Activated CD8-positive, alpha-beta T cell treated with anti-CD3 and anti-CD28 coated beads for 36 hours (primary cell): ENCODE measurements at regions of chr1 and their contacts with region 1.

Region 1: DNA sequence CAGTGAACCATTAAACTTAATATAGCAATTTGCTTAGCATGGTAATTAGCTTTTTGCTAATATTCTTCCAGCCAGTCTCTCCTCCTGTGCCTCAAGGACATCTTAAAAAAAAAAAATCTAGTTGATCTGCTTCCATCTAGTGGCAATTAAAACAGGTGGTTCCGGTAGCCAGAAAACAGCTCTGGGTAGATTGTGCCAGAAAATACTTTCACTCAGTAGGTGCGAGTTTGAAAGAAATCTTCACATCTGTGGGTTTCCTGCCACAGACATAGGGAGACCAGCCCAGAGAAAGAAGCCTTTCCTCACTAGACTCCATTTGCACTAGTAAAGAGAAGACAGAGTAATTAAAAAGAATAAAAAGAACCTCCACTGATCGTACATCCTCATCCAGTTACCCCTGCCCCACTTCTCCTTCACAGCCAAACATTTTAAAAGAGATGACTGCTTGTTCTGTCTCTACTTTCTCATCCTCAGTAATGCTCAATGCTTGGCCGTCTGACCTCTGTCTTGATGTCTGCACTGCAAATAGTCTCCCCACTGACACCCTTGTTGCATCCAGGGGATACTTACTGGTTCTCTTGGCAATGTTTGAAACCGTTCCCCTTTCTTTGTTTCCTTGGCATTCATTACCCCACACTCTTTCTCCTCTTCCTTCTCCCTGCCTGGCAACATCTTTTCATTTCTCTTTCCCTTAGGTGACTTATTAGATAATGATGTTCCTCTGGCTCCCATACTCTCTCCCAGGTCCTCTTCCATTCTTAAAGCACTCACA is 16.9 kb downstream of the SELL start:
- DNase-seq: peak; percentile 58
- ATAC-seq: peak; percentile 39
- H3K4me3 Mint-ChIP-seq: peak overlapping the region; percentile 2
- H3K27ac Mint-ChIP-seq: peak overlapping the region; percentile 88
- H3K4me1 Mint-ChIP-seq: peaks cover 91% of the 10 kb centered on the region
- H3K27me3 Mint-ChIP-seq: no peaks in the 10 kb centered on the region
- CTCF ChIP-seq: peak; percentile 55

Region 2: GRCh38 chr1:169485544-169486278 is 208.8 kb before region 1 on chr1 and contains the start of gene SLC19A2:
- CTCF ChIA-PET with region 1: no interaction called
- POLR2A ChIA-PET with region 1: no interaction called
- intact Hi-C with region 1: loop called (anchors 10 kb)
- DNase-seq: peak; percentile 96
- ATAC-seq: peak; percentile 99
- H3K4me3 Mint-ChIP-seq: peak within 1 kb of the TSS; percentile 87
- H3K27ac Mint-ChIP-seq: peak within 1 kb of the TSS; percentile 92
- H3K4me1 Mint-ChIP-seq: peaks cover 52% of the 10 kb centered on the region
- H3K27me3 Mint-ChIP-seq: no peaks in the 10 kb centered on the region
- CTCF ChIP-seq: peak; percentile 11
- total RNA-seq, gene SLC19A2: 5.7 to 6.4 TPM

Region 3: DNA sequence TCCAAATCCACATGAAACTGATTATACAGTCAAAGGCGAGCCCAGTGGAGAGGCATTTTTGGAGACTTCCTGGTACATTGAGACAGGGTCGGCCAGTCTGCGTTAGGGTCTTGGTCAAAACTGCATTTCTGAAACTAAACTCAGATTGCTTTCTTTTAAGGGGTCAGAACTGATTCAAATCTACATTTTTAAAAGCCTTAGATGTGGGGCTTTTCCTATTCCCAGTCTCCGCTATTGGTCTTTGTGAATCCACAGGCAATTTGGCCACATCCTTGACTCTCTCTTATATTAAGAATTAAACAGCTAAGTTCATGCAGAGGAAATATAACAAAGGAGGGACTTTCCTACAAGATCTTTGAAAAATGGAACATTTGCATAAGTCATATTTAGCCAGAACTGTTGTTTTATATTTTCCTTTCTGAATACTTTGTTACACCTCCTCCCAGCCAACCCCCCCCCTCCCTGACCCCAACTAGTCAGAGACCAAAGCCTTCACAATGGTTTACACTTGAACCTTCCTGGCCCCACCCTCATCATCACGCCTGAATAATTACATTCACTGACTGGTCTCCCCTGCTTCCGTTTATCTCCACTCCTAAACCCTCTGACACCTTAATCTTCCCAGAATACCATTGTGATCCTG is 14.0 kb before region 1 on chr1:
- CTCF ChIA-PET with region 1: interaction called, 21 read pairs
- POLR2A ChIA-PET with region 1: interaction called, 19 read pairs
- intact Hi-C with region 1: loop called (anchors 2 kb)
- DNase-seq: peak; percentile 83
- ATAC-seq: peak; percentile 85
- H3K4me3 Mint-ChIP-seq: peak overlapping the region; percentile 48
- H3K27ac Mint-ChIP-seq: peak overlapping the region; percentile 92
- H3K4me1 Mint-ChIP-seq: peaks cover 59% of the 10 kb centered on the region
- H3K27me3 Mint-ChIP-seq: no peaks in the 10 kb centered on the region
- CTCF ChIP-seq: no peak